ENCODE measurements at regions of chr5 and their contacts with region 1.

Region 1: DNA sequence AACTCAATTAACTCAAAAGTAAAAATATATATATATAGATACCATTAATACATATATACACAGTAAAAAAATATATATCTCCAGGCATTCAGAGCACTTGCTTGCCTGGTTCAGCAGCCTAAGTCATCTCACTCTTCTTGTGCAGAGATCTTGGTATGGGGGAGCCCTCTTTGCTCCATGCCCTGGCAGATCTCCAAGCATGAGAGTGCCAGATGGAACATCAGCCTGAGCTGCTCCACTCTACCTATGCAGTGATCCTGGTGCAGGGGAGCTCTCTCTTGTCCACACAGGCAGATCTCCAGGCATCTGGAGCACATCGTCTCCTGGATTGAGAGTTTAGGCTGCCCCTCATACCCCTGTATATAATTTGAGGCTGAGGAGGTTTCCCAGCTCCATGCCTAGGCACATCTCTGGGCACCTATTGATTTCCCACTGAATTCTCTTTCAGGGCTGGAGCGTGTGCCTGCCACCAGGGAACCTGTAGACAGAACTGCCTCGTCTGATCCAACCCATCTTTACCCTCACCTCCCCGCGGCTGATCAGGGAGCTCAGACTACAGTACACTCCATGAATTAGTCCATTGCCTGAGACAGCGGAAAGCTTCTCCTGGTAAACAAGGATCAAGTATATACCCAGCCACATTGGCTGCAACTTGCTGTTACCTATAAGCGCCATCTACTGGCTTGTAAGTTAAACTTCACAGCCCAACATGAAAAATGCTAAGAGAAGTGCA is 342.4 kb upstream of the GRIA1 start:
- DNase-seq: peak; percentile 35 to 51
- H3K4me3 ChIP-seq: no peak overlapping the region
- H3K4me1 ChIP-seq: no peaks in the 10 kb centered on the region
- H3K27me3 ChIP-seq: peaks cover 4% of the 10 kb centered on the region; the same call in 1 of the 2 replicates

Region 2: GRCh38 chr5:152488869-152489268 is 659.2 kb before region 1 on chr5:
- in situ Hi-C with region 1: no loop called
- DNase-seq: no peak
- H3K4me3 ChIP-seq: no peak overlapping the region
- H3K4me1 ChIP-seq: no peaks in the 10 kb centered on the region
- H3K27me3 ChIP-seq: no peaks in the 10 kb centered on the region

Region 3: DNA sequence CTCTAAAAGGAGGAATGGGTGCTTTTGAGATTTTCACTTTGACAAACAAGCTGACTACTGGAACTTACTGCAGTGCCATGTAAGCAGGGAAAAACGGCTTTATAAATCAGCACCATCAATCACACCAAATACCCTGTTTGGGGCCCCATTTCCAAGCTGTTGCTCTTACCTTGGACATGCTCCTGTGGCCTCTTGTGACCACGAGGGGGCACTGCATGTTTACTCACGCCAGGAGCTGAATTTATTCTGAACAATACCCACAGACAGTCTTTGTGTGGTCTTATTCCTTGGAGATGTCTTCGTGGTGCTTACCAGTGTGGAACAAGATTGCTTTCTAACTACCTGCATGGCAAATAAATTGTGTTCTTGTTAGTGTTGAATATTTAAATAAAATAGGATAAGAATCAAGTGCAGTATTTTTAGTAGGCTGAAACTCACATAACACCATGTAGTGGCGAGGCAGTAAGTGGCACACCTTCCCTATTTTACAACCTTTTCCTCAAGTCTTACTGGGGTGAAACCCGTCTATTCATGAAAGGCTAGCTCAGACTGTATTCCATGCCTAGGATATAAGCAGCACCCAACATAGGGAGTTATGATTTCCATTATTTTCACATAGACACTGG is 587.4 kb before region 1 on chr5:
- in situ Hi-C with region 1: loop called (anchors 25 kb)
- DNase-seq: peak; percentile 22 to 71
- H3K4me3 ChIP-seq: no peak overlapping the region
- H3K4me1 ChIP-seq: no peaks in the 10 kb centered on the region
- H3K27me3 ChIP-seq: no peaks in the 10 kb centered on the region

Region 4: DNA sequence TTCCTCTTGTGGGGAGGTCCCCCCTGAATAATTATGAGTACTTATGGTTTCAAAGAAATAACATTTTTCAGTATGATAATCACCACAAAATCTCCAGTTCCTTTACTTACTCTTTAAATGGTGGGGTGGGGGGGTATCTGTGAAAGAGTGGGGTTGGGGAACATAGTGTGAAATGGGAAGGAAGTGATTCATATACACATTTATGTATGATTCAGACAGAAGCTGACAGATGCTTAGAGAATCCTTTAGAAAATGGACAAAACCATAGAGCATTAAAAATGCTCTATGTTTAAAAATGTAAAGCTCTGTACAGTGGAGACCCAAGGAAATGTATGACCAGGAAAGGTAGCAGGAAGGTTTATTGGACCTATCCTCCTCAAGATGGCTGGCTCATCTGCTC is 74.9 kb after region 1 on chr5:
- in situ Hi-C with region 1: no loop called
- DNase-seq: no peak
- H3K4me3 ChIP-seq: no peak overlapping the region
- H3K4me1 ChIP-seq: no peaks in the 10 kb centered on the region
- H3K27me3 ChIP-seq: no peaks in the 10 kb centered on the region

Region 5: DNA sequence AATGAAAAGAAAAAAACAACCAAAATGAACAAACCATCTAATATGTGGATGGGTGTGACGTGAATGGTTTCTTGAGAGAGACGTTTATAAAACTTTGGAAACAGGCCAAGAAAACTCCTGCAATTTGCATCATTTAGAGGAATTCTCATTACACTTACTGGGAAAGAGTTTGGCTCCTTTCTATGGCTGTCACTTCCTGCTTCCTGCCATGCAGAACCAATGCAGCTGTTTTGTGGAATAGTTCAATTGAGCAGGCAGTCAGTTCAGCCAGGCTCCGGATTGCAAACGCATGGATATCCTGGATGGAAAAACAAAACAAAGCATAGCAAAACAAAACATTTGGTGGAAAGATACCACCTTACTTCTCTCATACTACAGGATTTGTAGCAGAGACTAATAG is 854.0 kb after region 1 on chr5:
- in situ Hi-C with region 1: no loop called
- DNase-seq: no peak
- H3K4me3 ChIP-seq: no peak overlapping the region
- H3K4me1 ChIP-seq: no peaks in the 10 kb centered on the region
- H3K27me3 ChIP-seq: no peaks in the 10 kb centered on the region

Measured in HAP-1 (cell line).